ENCODE measurements at regions of chr12 and their contacts with region 1.

Region 1: GRCh38 chr12:546921-547845 is 87.4 kb downstream of the B4GALNT3 start:
- DNase-seq: peak; percentile 15
- ATAC-seq: peak; percentile 83
- H3K4me3 ChIP-seq: no peak overlapping the region
- H3K27ac ChIP-seq: no peak overlapping the region
- H3K4me1 ChIP-seq: peaks cover 4% of the 10 kb centered on the region; the same call in 1 of the 2 replicates
- H3K27me3 ChIP-seq: no peaks in the 10 kb centered on the region
- CTCF ChIP-seq: peak; percentile 93

Region 2: GRCh38 chr12:93266-94005 is 453.7 kb before region 1 on chr12:
- CTCF ChIA-PET with region 1: interaction called, 11 read pairs
- POLR2A ChIA-PET with region 1: no interaction called
- in situ Hi-C with region 1: no loop called
- intact Hi-C with region 1: no loop called
- DNase-seq: no peak
- ATAC-seq: no peak
- H3K4me3 ChIP-seq: no peak overlapping the region
- H3K27ac ChIP-seq: no peak overlapping the region
- H3K4me1 ChIP-seq: no peaks in the 10 kb centered on the region
- H3K27me3 ChIP-seq: peaks cover 7% of the 10 kb centered on the region; the same call in 1 of the 2 replicates
- CTCF ChIP-seq: no peak

Region 3: DNA sequence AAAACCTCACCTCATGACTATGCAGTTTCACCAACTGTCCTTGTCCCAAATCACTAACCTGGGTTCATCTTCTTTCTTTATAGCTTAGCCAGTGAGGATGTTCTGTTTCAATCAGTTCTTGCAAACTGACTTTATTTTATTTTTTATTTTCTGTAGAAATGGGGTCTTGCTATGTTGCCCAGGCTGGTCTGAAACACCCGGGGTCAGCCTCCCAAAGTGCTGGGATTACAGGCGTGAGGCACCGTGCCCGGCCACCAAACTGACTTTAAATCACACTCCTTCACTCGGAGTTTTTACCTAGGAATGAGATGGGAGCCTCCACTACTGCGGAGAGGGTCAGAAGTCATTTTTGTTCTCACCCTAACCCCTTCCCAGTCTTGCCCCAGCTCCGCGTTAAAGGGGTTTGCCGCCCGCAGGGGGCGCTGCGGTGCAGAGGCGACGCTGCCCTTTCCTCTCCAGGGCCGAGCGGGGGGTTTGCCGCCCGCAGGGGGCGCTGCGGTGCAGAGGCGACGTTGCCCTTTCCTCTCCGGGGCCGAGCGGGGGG is 94.4 kb before region 1 on chr12:
- CTCF ChIA-PET with region 1: no interaction called
- POLR2A ChIA-PET with region 1: no interaction called
- in situ Hi-C with region 1: no loop called
- intact Hi-C with region 1: loop called (anchors 5 kb)
- DNase-seq: no peak
- ATAC-seq: no peak
- H3K4me3 ChIP-seq: no peak overlapping the region
- H3K27ac ChIP-seq: no peak overlapping the region
- H3K4me1 ChIP-seq: no peaks in the 10 kb centered on the region
- H3K27me3 ChIP-seq: peaks cover under 1% of the 10 kb centered on the region; the same call in 1 of the 2 replicates
- CTCF ChIP-seq: peak; percentile 33; the same call in 1 of the 2 replicates

Region 4: DNA sequence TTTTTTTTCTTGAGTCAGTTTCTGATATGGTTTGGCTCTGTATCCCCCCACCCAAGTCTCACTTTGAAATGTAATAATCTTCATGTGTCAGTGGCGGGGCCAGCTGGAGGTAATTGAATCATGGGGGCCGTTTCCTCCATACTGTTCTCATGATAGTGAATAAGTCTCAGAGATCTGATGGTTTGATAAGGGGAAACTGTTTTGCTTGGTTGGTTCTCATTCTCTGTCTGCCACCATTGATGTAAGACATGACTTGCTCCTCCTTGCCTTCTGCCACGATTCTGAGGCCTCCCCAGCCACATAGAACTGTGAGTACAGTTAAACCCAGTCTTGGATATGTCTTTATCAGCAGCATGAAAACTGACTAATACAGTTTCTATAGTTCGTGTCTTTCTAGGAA is 248.1 kb after region 1 on chr12:
- CTCF ChIA-PET with region 1: no interaction called
- POLR2A ChIA-PET with region 1: interaction called, 12 read pairs
- in situ Hi-C with region 1: no loop called
- intact Hi-C with region 1: no loop called
- DNase-seq: no peak
- ATAC-seq: no peak
- H3K4me3 ChIP-seq: no peak overlapping the region
- H3K27ac ChIP-seq: no peak overlapping the region
- H3K4me1 ChIP-seq: peaks cover 9% of the 10 kb centered on the region; the same call in 1 of the 2 replicates
- H3K27me3 ChIP-seq: no peaks in the 10 kb centered on the region
- CTCF ChIP-seq: no peak

Region 5: GRCh38 chr12:1217191-1217949 is 670.2 kb after region 1 on chr12:
- CTCF ChIA-PET with region 1: no interaction called
- POLR2A ChIA-PET with region 1: no interaction called
- in situ Hi-C with region 1: no loop called
- intact Hi-C with region 1: no loop called
- DNase-seq: peak; percentile 28
- ATAC-seq: peak; percentile 88
- H3K4me3 ChIP-seq: no peak overlapping the region
- H3K27ac ChIP-seq: peak overlapping the region; percentile 23; the same call in 1 of the 2 replicates
- H3K4me1 ChIP-seq: peaks cover 24% of the 10 kb centered on the region
- H3K27me3 ChIP-seq: no peaks in the 10 kb centered on the region
- CTCF ChIP-seq: no peak